ENCODE measurements at regions of chr22 and their contacts with region 1.

Region 1: GRCh38 chr22:45149671-45150070 is 14.1 kb upstream of the NUP50 start:
- DNase-seq: no peak
- H3K4me3 ChIP-seq: no peak overlapping the region
- H3K27ac ChIP-seq: no peak overlapping the region
- H3K4me1 ChIP-seq: no peaks in the 10 kb centered on the region
- H3K27me3 ChIP-seq: no peaks in the 10 kb centered on the region
- CTCF ChIP-seq: no peak

Region 2: GRCh38 chr22:45101515-45102227 is 48.0 kb before region 1 on chr22:
- CTCF ChIA-PET with region 1: no interaction called
- dilution Hi-C with region 1: loop called (anchors 5 kb)
- in situ Hi-C with region 1: no loop called
- intact Hi-C with region 1: no loop called
- DNase-seq: peak; percentile 15
- H3K4me3 ChIP-seq: no peak overlapping the region
- H3K27ac ChIP-seq: no peak overlapping the region
- H3K4me1 ChIP-seq: peaks cover 12% of the 10 kb centered on the region
- H3K27me3 ChIP-seq: no peaks in the 10 kb centered on the region
- CTCF ChIP-seq: peak; percentile 66 to 81

Region 3: GRCh38 chr22:45171830-45172229 is 22.2 kb after region 1 on chr22:
- CTCF ChIA-PET with region 1: no interaction called
- dilution Hi-C with region 1: no loop called
- in situ Hi-C with region 1: no loop called
- intact Hi-C with region 1: no loop called
- DNase-seq: no peak
- H3K4me3 ChIP-seq: no peak overlapping the region
- H3K27ac ChIP-seq: no peak overlapping the region
- H3K4me1 ChIP-seq: peaks cover 9% of the 10 kb centered on the region
- H3K27me3 ChIP-seq: no peaks in the 10 kb centered on the region
- CTCF ChIP-seq: no peak

Region 4: DNA sequence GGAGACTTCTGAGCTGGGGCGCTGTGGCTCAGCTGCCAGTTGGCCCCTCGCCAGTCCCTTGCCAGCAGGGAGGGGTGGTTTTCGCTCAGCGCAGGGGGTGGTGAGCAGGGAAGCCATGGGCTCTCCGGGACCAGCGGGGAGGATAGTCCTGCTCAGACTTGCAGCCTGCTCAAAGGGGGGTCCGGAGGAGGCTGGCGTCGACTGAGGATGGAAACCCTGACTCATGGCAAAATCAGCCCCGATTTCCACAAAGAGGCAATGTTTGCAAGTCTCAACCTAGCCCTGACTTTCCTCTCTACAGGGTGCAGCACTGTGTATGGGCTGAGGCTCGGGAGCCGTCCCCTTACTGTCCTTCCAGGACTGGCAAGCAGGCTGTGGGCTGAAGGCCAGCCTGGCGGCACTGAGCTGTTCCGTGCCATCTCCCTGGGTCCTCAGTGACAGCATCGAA is 388.1 kb after region 1 on chr22:
- CTCF ChIA-PET with region 1: no interaction called
- dilution Hi-C with region 1: no loop called
- in situ Hi-C with region 1: no loop called
- intact Hi-C with region 1: no loop called
- DNase-seq: peak; percentile 100
- H3K4me3 ChIP-seq: no peak overlapping the region
- H3K27ac ChIP-seq: peak overlapping the region; percentile 100
- H3K4me1 ChIP-seq: peaks cover 25% of the 10 kb centered on the region
- H3K27me3 ChIP-seq: no peaks in the 10 kb centered on the region
- CTCF ChIP-seq: no peak